CD8-positive, alpha-beta T cell (primary cell): ENCODE measurements at regions of chr2 and their contacts with region 1.

Region 1: GRCh38 chr2:233061591-233062450 is 1.7 kb downstream of the INPP5D start:
- DNase-seq: peak in 4 of 9 experiments; percentile 35 to 61 (median 45)
- ATAC-seq: peak; percentile 9
- H3K4me3 ChIP-seq: peak overlapping the region; percentile 75 to 83
- H3K4me3 Mint-ChIP-seq: peak overlapping the region; percentile 95
- H3K27ac ChIP-seq: peak overlapping the region; percentile 64 to 95
- H3K27ac Mint-ChIP-seq: peak overlapping the region; percentile 94
- H3K4me1 ChIP-seq: peaks cover 44% of the 10 kb centered on the region
- H3K4me1 Mint-ChIP-seq: peaks cover 55% of the 10 kb centered on the region
- H3K27me3 ChIP-seq: no peaks in the 10 kb centered on the region
- H3K27me3 Mint-ChIP-seq: no peaks in the 10 kb centered on the region
- CTCF ChIP-seq: no peak

Region 2: DNA sequence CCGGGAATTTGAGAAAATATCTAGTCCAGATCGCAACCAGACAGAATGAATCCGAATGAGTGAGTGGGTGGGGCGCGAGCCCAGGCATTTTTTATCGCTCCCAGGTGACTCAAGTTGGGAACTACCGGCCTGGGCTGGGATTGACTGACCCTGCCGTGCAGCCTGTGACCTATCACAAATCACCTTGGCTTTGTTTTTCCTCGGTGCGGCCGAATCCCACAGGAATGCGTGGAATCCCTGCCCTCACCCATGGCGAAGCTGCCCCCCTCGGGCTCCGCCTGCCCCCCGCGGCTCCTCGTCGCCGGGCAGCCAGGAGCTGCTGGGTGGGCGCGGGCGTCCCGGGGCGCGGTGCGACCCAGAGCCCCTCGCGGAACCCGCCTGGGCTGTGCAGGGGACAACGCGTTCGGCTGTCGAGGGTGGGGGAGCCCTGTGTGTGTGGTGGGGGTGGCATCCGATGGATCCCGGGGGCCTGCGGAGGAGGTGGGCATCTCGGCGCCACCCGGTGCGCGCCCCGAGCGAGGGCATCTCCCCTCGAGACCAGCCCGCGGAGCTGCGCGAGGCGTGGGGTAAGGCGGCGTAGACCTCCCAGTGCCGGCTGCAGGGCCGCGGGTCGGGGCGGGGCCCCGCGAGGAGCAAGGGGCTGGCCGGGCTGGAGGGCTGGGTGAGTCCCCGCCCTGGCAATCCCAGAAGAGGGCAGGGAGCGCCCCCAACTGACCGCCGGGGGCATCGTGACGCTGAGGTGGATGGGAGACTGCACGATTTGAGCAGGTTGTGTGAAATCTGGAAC is 1649.8 kb before region 1 on chr2:
- CTCF ChIA-PET with region 1: no interaction called
- POLR2A ChIA-PET with region 1: no interaction called
- intact Hi-C with region 1: no loop called
- DNase-seq: peak; percentile 28 to 85 (median 74)
- ATAC-seq: peak; percentile 97
- H3K4me3 ChIP-seq: peak overlapping the region in 1 of 2 experiments; percentile 50
- H3K4me3 Mint-ChIP-seq: peak overlapping the region; percentile 60
- H3K27ac ChIP-seq: no peak overlapping the region
- H3K27ac Mint-ChIP-seq: no peak overlapping the region
- H3K4me1 ChIP-seq: peaks cover 5% of the 10 kb centered on the region
- H3K4me1 Mint-ChIP-seq: peaks cover 6% of the 10 kb centered on the region
- H3K27me3 ChIP-seq: peaks cover 0 to 11% of the 10 kb centered on the region in 2 experiments
- H3K27me3 Mint-ChIP-seq: peaks cover 34% of the 10 kb centered on the region
- CTCF ChIP-seq: peak; percentile 44

Region 3: DNA sequence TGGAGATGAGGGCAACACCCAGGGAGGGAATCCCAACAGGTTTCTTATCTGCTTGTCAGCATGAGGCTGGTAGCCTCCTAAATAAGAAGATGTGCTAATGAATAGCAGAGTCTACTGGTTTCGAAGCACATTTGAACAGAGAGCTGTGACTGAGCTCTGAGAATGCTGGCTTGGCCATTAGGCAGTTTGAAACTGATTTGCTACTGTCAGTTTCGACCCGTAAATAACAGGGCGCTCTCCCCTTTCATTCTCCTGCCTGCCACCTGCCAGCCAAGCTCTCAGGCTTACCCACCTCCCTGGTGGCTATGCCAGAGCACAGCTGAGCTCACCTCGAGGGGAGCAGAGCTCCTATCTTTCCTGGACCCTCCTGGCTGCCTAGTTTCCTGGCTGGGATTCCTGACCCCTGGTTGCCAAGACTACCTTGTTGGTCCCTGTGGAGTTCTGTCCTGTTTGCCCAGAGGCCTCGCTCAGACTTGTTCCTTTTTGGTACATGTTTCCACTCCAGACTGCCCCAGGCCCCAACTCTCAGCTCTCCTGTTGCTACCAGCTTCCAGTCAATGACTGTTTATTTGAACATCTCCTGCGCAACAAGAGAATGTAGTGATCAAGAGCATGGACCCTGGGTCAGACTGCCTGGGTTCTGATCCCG is 785.6 kb before region 1 on chr2:
- CTCF ChIA-PET with region 1: no interaction called
- POLR2A ChIA-PET with region 1: no interaction called
- intact Hi-C with region 1: no loop called
- DNase-seq: no peak
- ATAC-seq: no peak
- H3K4me3 ChIP-seq: no peak overlapping the region
- H3K4me3 Mint-ChIP-seq: no peak overlapping the region
- H3K27ac ChIP-seq: no peak overlapping the region
- H3K27ac Mint-ChIP-seq: no peak overlapping the region
- H3K4me1 ChIP-seq: no peaks in the 10 kb centered on the region
- H3K4me1 Mint-ChIP-seq: peaks cover 9% of the 10 kb centered on the region
- H3K27me3 ChIP-seq: no peaks in the 10 kb centered on the region
- H3K27me3 Mint-ChIP-seq: no peaks in the 10 kb centered on the region
- CTCF ChIP-seq: no peak

Region 4: GRCh38 chr2:232816657-232817056 is 245.2 kb before region 1 on chr2:
- CTCF ChIA-PET with region 1: no interaction called
- POLR2A ChIA-PET with region 1: no interaction called
- intact Hi-C with region 1: no loop called
- DNase-seq: no peak
- ATAC-seq: no peak
- H3K4me3 ChIP-seq: no peak overlapping the region
- H3K4me3 Mint-ChIP-seq: no peak overlapping the region
- H3K27ac ChIP-seq: no peak overlapping the region
- H3K27ac Mint-ChIP-seq: no peak overlapping the region
- H3K4me1 ChIP-seq: no peaks in the 10 kb centered on the region
- H3K4me1 Mint-ChIP-seq: no peaks in the 10 kb centered on the region
- H3K27me3 ChIP-seq: no peaks in the 10 kb centered on the region
- H3K27me3 Mint-ChIP-seq: no peaks in the 10 kb centered on the region
- CTCF ChIP-seq: no peak

Region 5: GRCh38 chr2:233075966-233076339 is 14.1 kb after region 1 on chr2:
- CTCF ChIA-PET with region 1: interaction called, 38 read pairs
- POLR2A ChIA-PET with region 1: interaction called, 89 read pairs
- intact Hi-C with region 1: loop called in 1 of 2 experiments (anchors 1 kb)
- DNase-seq: peak in 5 of 9 experiments; percentile 37 to 83 (median 67)
- ATAC-seq: peak; percentile 70
- H3K4me3 ChIP-seq: peak overlapping the region; percentile 18 to 22
- H3K4me3 Mint-ChIP-seq: no peak overlapping the region
- H3K27ac ChIP-seq: peak overlapping the region; percentile 25 to 80
- H3K27ac Mint-ChIP-seq: no peak overlapping the region
- H3K4me1 ChIP-seq: peaks cover 79% of the 10 kb centered on the region
- H3K4me1 Mint-ChIP-seq: peaks cover 47% of the 10 kb centered on the region
- H3K27me3 ChIP-seq: no peaks in the 10 kb centered on the region
- H3K27me3 Mint-ChIP-seq: no peaks in the 10 kb centered on the region
- CTCF ChIP-seq: no peak

Region 6: DNA sequence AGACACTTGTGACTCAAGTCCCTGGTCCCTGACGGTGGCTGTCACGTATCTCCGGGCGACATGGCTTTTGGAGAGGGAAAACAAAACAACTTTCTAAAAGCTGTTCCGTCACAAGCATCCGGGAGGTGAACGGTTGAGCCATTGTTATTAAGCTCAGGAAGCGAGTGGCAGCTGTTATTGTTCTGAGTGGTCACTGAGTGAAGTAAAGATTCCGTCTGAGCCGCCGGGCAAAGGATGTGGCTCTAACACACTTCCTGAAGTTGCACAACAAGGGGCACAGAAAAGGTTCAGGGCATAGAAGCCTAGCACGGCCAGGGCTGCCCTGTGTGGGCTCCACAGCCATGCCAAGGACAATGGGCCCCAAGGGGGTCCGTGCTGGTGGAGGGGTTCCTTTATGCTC is 22.7 kb after region 1 on chr2:
- CTCF ChIA-PET with region 1: interaction called, 38 read pairs
- POLR2A ChIA-PET with region 1: interaction called, 89 read pairs
- intact Hi-C with region 1: loop called in 1 of 2 experiments (anchors 2 kb)
- DNase-seq: peak in 6 of 9 experiments; percentile 54 to 81 (median 66)
- ATAC-seq: peak; percentile 44
- H3K4me3 ChIP-seq: peak overlapping the region; percentile 13 to 16
- H3K4me3 Mint-ChIP-seq: peak overlapping the region; percentile 76
- H3K27ac ChIP-seq: peak overlapping the region; percentile 56 to 92
- H3K27ac Mint-ChIP-seq: peak overlapping the region; percentile 91
- H3K4me1 ChIP-seq: peaks cover 72% of the 10 kb centered on the region
- H3K4me1 Mint-ChIP-seq: peaks cover 85% of the 10 kb centered on the region
- H3K27me3 ChIP-seq: no peaks in the 10 kb centered on the region
- H3K27me3 Mint-ChIP-seq: no peaks in the 10 kb centered on the region
- CTCF ChIP-seq: no peak

Region 7: GRCh38 chr2:233100192-233100998 is 38.6 kb after region 1 on chr2:
- CTCF ChIA-PET with region 1: interaction called, 11 read pairs
- POLR2A ChIA-PET with region 1: interaction called, 5 read pairs
- intact Hi-C with region 1: loop called (anchors 5 kb)
- DNase-seq: peak; percentile 39 to 95 (median 77)
- ATAC-seq: peak; percentile 81
- H3K4me3 ChIP-seq: peak overlapping the region; percentile 20 to 32
- H3K4me3 Mint-ChIP-seq: peak overlapping the region; percentile 66
- H3K27ac ChIP-seq: peak overlapping the region; percentile 30 to 81
- H3K27ac Mint-ChIP-seq: peak overlapping the region; percentile 92
- H3K4me1 ChIP-seq: peaks cover 47% of the 10 kb centered on the region
- H3K4me1 Mint-ChIP-seq: peaks cover 67% of the 10 kb centered on the region
- H3K27me3 ChIP-seq: no peaks in the 10 kb centered on the region
- H3K27me3 Mint-ChIP-seq: no peaks in the 10 kb centered on the region
- CTCF ChIP-seq: no peak

Region 8: DNA sequence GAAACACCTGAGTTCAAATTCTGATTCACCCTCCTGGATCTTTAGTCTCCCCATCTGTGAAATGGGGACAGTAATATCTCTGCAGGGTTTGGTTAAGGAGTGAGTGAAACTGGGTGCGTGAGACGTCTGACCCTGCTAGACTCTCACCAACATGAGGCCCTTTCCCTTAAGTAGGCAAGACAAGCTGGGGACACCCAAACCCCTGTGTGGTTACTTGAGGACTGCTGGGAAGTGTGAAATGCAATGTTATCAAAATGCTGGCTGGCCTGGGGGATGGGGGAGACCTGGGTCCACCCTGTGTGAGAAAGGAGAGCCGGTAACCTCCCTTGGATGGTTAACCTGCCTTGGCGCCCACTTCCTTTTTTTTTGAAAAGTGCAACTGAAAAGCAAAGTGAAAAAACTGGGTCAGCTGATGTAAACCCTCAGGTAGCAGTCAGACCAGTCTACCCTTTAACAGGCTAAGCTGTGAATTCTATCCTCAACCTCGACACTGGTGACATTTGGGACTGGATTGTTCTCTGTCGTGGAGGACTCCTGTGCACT is 80.6 kb after region 1 on chr2:
- CTCF ChIA-PET with region 1: interaction called, 3 read pairs
- POLR2A ChIA-PET with region 1: interaction called, 10 read pairs
- intact Hi-C with region 1: no loop called
- DNase-seq: peak in 5 of 9 experiments; percentile 21 to 70 (median 55)
- ATAC-seq: peak; percentile 67
- H3K4me3 ChIP-seq: no peak overlapping the region
- H3K4me3 Mint-ChIP-seq: peak overlapping the region; percentile 15
- H3K27ac ChIP-seq: peak overlapping the region in 1 of 2 experiments; percentile 61
- H3K27ac Mint-ChIP-seq: peak overlapping the region; percentile 81
- H3K4me1 ChIP-seq: peaks cover 24% of the 10 kb centered on the region
- H3K4me1 Mint-ChIP-seq: peaks cover 41% of the 10 kb centered on the region
- H3K27me3 ChIP-seq: no peaks in the 10 kb centered on the region
- H3K27me3 Mint-ChIP-seq: no peaks in the 10 kb centered on the region
- CTCF ChIP-seq: no peak

Region 9: DNA sequence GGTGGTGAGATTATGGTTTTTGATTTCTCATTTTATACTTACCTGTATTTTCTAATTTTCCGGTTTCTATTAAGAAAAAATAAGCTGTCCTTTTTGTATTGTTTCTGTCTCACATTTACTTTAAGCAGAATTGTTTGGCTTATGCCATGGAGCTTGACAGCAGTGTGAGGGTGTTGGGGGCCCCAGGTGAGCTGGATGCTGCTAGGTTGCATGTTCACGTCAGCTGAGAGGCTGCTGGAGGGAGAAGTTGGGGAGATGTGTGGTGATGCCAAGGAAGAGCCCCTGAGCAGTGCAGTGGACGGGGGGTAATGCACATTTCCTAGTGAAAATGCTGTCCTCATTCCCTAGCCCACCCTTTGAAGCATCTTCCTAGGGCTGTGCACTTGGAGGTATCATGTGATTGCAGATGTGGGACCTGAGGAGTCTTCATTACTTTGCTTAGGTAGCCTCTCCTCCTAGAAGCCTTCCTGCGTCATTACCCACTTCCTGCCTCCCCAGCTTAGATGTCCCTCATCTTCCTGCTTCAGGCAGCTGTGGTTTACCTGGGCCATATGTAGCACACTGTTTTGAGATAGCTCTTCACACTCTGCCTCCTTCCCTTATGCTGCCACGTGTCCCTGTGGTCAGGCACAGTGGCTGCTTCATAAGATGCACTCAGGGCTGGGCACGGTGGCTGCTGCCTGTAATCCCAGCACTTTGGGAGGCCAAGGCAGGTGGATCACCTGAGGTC is 205.9 kb after region 1 on chr2:
- CTCF ChIA-PET with region 1: interaction called, 4 read pairs
- POLR2A ChIA-PET with region 1: interaction called, 17 read pairs
- intact Hi-C with region 1: no loop called
- DNase-seq: peak; percentile 68 to 98 (median 84)
- ATAC-seq: peak; percentile 89
- H3K4me3 ChIP-seq: peak overlapping the region in 1 of 2 experiments; percentile 2
- H3K4me3 Mint-ChIP-seq: peak overlapping the region; percentile 68
- H3K27ac ChIP-seq: peak overlapping the region; percentile 62 to 95
- H3K27ac Mint-ChIP-seq: peak overlapping the region; percentile 94
- H3K4me1 ChIP-seq: peaks cover 59% of the 10 kb centered on the region
- H3K4me1 Mint-ChIP-seq: peaks cover 75% of the 10 kb centered on the region
- H3K27me3 ChIP-seq: no peaks in the 10 kb centered on the region
- H3K27me3 Mint-ChIP-seq: no peaks in the 10 kb centered on the region
- CTCF ChIP-seq: no peak